Activated CD8-positive, alpha-beta memory T cell treated with anti-CD3 and anti-CD28 coated beads, Interleukin-2, amount 10 ng/mL, durations not matched to agents 7 days and 5 days (primary cell): ENCODE measurements at regions of chr20 and their contacts with region 1.

Region 1: DNA sequence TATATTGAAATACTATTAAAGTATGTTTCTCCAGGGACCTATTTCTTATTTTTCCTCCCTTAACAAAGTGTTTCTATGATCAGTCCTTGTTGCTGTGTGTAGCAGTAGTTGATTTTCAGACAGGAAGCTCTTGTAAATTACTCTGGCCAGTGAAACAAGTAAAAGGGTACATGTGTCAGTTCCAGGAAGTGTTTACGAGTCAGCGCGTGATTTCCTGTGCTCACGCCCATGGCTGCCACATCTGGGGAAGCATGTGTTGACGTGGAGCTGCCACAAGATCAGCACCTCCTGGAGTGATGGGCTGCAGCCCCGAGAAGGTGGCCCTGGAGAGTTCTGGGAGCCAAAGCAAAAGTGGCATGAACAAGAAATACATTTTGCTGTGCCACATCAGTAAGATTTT is 38.6 kb upstream of the GGTLC1 start:
- DNase-seq: peak; percentile 93
- ATAC-seq: peak; percentile 99
- H3K4me3 Mint-ChIP-seq: peak overlapping the region; percentile 60
- H3K27ac Mint-ChIP-seq: peak overlapping the region; percentile 88
- H3K4me1 Mint-ChIP-seq: peaks cover 38% of the 10 kb centered on the region
- H3K27me3 Mint-ChIP-seq: no peaks in the 10 kb centered on the region

Region 2: DNA sequence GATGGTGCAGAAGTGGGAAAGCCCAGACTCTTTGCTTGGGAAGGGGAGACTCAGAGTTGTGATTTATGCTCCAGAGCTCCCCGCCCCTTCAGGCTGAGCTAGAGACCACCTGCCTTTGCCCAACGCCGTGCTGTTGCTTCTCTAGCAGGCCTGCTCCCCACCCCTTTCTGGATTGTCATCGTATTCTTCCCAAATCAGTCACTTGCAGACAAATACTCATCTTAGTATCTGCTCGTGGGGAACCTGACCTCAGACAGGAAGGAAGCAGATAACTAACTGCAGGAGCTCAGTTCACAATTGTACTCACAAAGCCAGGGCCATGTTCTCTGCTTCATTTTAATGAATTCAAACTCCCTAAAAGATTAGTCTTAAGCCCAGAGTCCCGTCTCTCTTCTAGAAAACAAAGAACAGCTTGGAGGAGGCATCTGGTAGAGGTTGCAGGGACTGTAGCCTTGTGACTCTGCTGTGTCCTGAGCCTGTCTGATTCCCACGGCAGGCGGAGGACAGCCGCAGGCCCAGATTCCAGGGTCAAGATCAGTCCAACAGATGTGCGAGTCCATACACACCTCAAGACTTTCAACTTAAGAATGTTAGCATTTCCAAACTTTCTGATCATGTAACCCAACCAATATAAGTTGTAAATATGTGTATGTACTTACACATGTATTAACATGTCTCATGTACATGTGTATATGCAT is 18.5 kb after region 1 on chr20:
- CTCF ChIA-PET with region 1: interaction called, 25 read pairs
- DNase-seq: peak; percentile 83
- ATAC-seq: peak; percentile 94
- H3K4me3 Mint-ChIP-seq: peak overlapping the region; percentile 6
- H3K27ac Mint-ChIP-seq: peak overlapping the region; percentile 69
- H3K4me1 Mint-ChIP-seq: peaks cover 54% of the 10 kb centered on the region
- H3K27me3 Mint-ChIP-seq: no peaks in the 10 kb centered on the region